ENCODE measurements at regions of chr9 and their contacts with region 1.

Region 1: DNA sequence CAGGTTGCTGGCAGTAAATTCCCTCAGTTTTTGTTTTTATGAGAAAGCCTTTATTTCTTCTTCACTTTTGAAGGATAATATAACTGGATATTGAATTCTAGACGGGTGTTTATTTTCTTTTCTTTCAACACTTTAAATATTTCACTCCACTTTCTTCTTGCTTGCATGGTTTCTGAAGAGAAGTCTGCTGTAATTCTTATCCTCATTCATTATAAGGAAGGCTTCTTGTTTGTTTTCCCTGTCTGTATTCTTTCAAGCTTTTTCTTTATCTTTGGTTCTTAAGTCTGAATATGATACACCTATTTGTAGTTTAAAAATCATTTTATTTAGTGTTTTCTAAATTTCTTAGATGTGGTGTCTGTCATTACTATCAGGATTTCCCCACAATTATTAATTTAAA is 1054.3 kb downstream of the TLE1 start:
- DNase-seq: no peak
- H3K4me3 ChIP-seq: no peak overlapping the region
- CTCF ChIP-seq: no peak

Region 2: GRCh38 chr9:80359941-80360881 is 274.9 kb before region 1 on chr9:
- in situ Hi-C with region 1: no loop called
- DNase-seq: no peak
- H3K4me3 ChIP-seq: no peak overlapping the region
- CTCF ChIP-seq: no peak

Region 3: GRCh38 chr9:80516678-80517077 is 118.4 kb before region 1 on chr9:
- in situ Hi-C with region 1: no loop called
- DNase-seq: no peak
- H3K4me3 ChIP-seq: no peak overlapping the region
- CTCF ChIP-seq: no peak

Region 4: DNA sequence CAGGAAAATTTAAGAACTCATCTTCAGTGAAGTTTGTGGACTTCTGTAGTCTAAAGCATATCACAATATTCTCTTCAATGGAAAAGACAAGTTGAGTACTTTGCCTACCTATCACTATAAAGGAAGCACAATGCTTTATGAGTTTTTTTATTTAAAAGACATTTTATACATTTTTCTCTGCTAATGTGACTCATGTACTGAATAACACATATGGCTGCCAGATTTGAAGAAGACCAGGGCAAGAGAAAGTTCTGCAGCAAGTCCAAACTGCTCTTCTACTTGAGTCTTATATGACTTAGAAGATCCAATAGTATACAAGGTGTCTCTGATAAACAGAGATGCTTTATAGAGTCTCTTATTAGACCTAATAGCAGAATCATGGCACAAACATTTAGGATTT is 84.9 kb before region 1 on chr9:
- in situ Hi-C with region 1: no loop called
- DNase-seq: no peak
- H3K4me3 ChIP-seq: no peak overlapping the region
- CTCF ChIP-seq: no peak

Region 5: GRCh38 chr9:80690349-80690939 is 55.4 kb after region 1 on chr9:
- in situ Hi-C with region 1: loop called (anchors 5 kb)
- DNase-seq: no peak
- H3K4me3 ChIP-seq: no peak overlapping the region
- CTCF ChIP-seq: no peak